Activated CD8-positive, alpha-beta T cell treated with anti-CD3 and anti-CD28 coated beads for 36 hours (primary cell): ENCODE measurements at regions of chr6 and their contacts with region 1.

Region 1: GRCh38 chr6:85537055-85537494 is 56.6 kb downstream of the SNX14 start:
- DNase-seq: no peak
- ATAC-seq: no peak
- H3K4me3 Mint-ChIP-seq: no peak overlapping the region
- H3K27ac Mint-ChIP-seq: no peak overlapping the region
- H3K4me1 Mint-ChIP-seq: no peaks in the 10 kb centered on the region
- H3K27me3 Mint-ChIP-seq: no peaks in the 10 kb centered on the region
- CTCF ChIP-seq: peak; percentile 76

Region 2: DNA sequence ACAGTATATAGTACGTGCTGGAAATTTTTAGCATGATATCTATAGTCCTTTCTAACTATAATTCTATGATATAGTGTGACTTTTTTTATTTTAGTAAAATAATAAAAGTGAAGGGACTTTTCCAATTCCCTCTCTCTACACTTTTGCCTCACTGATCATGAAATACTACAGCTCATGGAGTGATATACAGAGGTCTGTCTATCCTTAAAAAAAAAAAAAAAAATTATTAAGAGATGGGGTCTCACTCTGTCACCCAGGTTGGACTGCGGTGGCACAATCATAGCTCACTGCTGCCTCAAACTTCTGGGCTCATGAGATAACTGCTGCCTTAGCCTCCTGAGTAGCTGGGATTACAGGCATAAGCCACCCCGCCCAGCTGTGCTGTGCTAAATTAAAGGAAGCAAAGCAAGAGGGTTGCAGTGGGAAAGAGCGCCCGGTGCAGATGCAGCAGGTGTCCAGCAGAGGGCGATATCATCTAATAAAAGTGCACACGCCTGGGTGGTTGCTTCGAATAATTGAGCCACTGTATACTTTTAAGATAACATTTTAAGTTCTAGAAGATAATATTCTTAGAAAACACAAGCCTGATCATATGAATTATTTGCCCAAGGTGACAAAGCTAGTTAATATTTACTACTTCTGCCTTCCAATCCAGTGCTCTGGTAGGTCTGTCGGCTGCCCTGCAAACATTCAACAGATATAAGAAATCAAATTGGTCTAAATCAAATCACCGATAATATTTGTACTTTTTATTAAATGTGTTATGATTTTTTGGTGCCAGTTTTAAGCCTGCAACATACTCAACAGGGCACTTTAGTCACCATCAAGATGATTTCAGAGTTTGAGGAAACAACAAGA is 182.1 kb before region 1 on chr6:
- CTCF ChIA-PET with region 1: interaction called, 36 read pairs
- POLR2A ChIA-PET with region 1: no interaction called
- intact Hi-C with region 1: loop called (anchors 5 kb)
- DNase-seq: peak; percentile 79
- ATAC-seq: peak; percentile 89
- H3K4me3 Mint-ChIP-seq: no peak overlapping the region
- H3K27ac Mint-ChIP-seq: no peak overlapping the region
- H3K4me1 Mint-ChIP-seq: no peaks in the 10 kb centered on the region
- H3K27me3 Mint-ChIP-seq: peaks cover 2% of the 10 kb centered on the region
- CTCF ChIP-seq: peak; percentile 91

Region 3: GRCh38 chr6:85360794-85361642 is 176.1 kb before region 1 on chr6:
- CTCF ChIA-PET with region 1: interaction called, 36 read pairs
- POLR2A ChIA-PET with region 1: no interaction called
- intact Hi-C with region 1: loop called (anchors 5 kb)
- DNase-seq: peak; percentile 8
- ATAC-seq: peak; percentile 63
- H3K4me3 Mint-ChIP-seq: no peak overlapping the region
- H3K27ac Mint-ChIP-seq: no peak overlapping the region
- H3K4me1 Mint-ChIP-seq: peaks cover 14% of the 10 kb centered on the region
- H3K27me3 Mint-ChIP-seq: no peaks in the 10 kb centered on the region
- CTCF ChIP-seq: no peak

Region 4: GRCh38 chr6:85498596-85499258 is 38.3 kb before region 1 on chr6:
- CTCF ChIA-PET with region 1: interaction called, 27 read pairs
- POLR2A ChIA-PET with region 1: no interaction called
- intact Hi-C with region 1: no loop called
- DNase-seq: no peak
- ATAC-seq: peak; percentile 19
- H3K4me3 Mint-ChIP-seq: no peak overlapping the region
- H3K27ac Mint-ChIP-seq: no peak overlapping the region
- H3K4me1 Mint-ChIP-seq: peaks cover 21% of the 10 kb centered on the region
- H3K27me3 Mint-ChIP-seq: no peaks in the 10 kb centered on the region
- CTCF ChIP-seq: no peak

Region 5: DNA sequence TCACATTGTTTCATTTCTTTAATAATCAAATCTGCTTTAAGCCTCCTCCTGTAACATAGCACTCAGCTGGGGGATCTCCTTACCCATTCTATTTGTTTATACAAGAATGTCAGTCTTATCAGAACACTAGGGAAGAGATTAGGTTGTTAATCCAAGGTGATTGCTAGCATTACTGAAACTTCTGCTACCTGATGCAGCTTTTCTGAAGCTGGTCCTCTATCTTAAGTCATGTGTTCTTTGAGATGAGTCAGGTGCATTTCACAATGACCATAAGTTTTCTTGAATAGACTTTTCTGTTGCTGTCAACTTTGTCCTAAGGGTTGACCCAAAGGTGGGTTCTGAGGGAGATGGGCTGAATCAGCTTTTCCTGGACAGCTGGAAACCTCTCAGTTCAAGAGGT is 166.3 kb after region 1 on chr6:
- CTCF ChIA-PET with region 1: no interaction called
- POLR2A ChIA-PET with region 1: no interaction called
- intact Hi-C with region 1: no loop called
- DNase-seq: no peak
- ATAC-seq: no peak
- H3K4me3 Mint-ChIP-seq: no peak overlapping the region
- H3K27ac Mint-ChIP-seq: no peak overlapping the region
- H3K4me1 Mint-ChIP-seq: no peaks in the 10 kb centered on the region
- H3K27me3 Mint-ChIP-seq: no peaks in the 10 kb centered on the region
- CTCF ChIP-seq: no peak